Heart left ventricle (tissue), 16 donors: ENCODE measurements at regions of chr1 and their contacts with region 1.

Region 1: GRCh38 chr1:74858136-74858535 is 125.2 kb downstream of the TYW3 start:
- DNase-seq: no peak
- ATAC-seq: no peak
- H3K4me3 ChIP-seq: no peak overlapping the region
- H3K27ac ChIP-seq: no peak overlapping the region
- H3K4me1 ChIP-seq: no peaks in the 10 kb centered on the region
- H3K27me3 ChIP-seq: no peaks in the 10 kb centered on the region
- CTCF ChIP-seq: no peak
- POLR2A ChIP-seq: no peak

Region 2: GRCh38 chr1:74913978-74914377 is 55.8 kb after region 1 on chr1:
- intact Hi-C with region 1: loop called in 1 of 10 experiments (anchors 10 kb)
- DNase-seq: no peak
- ATAC-seq: no peak
- H3K4me3 ChIP-seq: no peak overlapping the region
- H3K27ac ChIP-seq: no peak overlapping the region
- H3K4me1 ChIP-seq: no peaks in the 10 kb centered on the region
- H3K27me3 ChIP-seq: no peaks in the 10 kb centered on the region
- CTCF ChIP-seq: no peak
- POLR2A ChIP-seq: no peak

Region 3: GRCh38 chr1:75035536-75035935 is 177.4 kb after region 1 on chr1:
- intact Hi-C with region 1: no loop called
- DNase-seq: no peak
- ATAC-seq: no peak
- H3K4me3 ChIP-seq: no peak overlapping the region
- H3K27ac ChIP-seq: no peak overlapping the region
- H3K4me1 ChIP-seq: no peaks in the 10 kb centered on the region
- H3K27me3 ChIP-seq: no peaks in the 10 kb centered on the region
- CTCF ChIP-seq: no peak
- POLR2A ChIP-seq: no peak

Region 4: GRCh38 chr1:75317976-75318375 is 459.8 kb after region 1 on chr1:
- intact Hi-C with region 1: no loop called
- DNase-seq: no peak
- ATAC-seq: no peak
- H3K4me3 ChIP-seq: no peak overlapping the region
- H3K27ac ChIP-seq: no peak overlapping the region
- H3K4me1 ChIP-seq: no peaks in the 10 kb centered on the region
- H3K27me3 ChIP-seq: no peaks in the 10 kb centered on the region
- CTCF ChIP-seq: no peak
- POLR2A ChIP-seq: no peak